Pancreas (tissue), 10 donors: ENCODE measurements at regions of chr6 and their contacts with region 1.

Region 1: GRCh38 chr6:85764844-85765243 is 122.2 kb upstream of the SYNCRIP start:
- DNase-seq: no peak
- ATAC-seq: no peak
- H3K4me3 ChIP-seq: no peak overlapping the region
- H3K27ac ChIP-seq: no peak overlapping the region
- H3K4me1 ChIP-seq: no peaks in the 10 kb centered on the region
- H3K27me3 ChIP-seq: no peaks in the 10 kb centered on the region
- CTCF ChIP-seq: no peak

Region 2: DNA sequence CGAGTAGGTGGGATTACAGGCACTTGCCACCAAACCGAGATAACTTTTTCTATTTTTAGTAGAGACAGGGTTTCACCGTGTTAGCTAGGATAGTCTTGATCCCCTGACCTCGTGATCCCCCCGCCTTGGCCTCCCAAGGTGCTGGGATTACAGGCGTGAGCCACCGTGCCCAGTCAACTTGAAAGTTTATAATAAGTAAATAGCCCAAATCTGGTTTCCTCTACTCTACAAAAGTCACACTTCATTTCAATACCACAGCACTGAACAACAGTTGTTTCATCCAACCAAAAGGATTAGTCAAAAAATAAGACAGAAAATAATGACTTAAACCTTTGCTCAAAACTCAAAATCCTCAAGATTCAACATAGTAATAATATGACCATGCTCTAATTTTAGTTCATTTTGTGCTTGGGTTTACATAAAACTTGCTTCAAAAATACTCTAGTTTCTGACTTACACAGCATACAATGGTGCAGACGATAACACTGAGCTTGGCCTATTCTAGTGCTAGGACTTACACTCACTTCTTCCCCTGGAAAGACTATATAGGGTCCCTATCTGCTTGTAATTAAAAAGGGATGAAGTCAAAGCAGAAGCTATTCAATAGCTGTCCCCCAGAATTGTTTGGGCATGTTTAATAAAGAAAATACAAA is 258.3 kb before region 1 on chr6:
- intact Hi-C with region 1: no loop called
- DNase-seq: no peak
- ATAC-seq: no peak
- H3K4me3 ChIP-seq: no peak overlapping the region
- H3K27ac ChIP-seq: no peak overlapping the region
- H3K4me1 ChIP-seq: no peaks in the 10 kb centered on the region
- H3K27me3 ChIP-seq: no peaks in the 10 kb centered on the region
- CTCF ChIP-seq: no peak

Region 3: GRCh38 chr6:85660181-85660611 is 104.6 kb before region 1 on chr6:
- intact Hi-C with region 1: no loop called
- DNase-seq: no peak
- ATAC-seq: no peak
- H3K4me3 ChIP-seq: no peak overlapping the region
- H3K27ac ChIP-seq: no peak overlapping the region
- H3K4me1 ChIP-seq: no peaks in the 10 kb centered on the region
- H3K27me3 ChIP-seq: no peaks in the 10 kb centered on the region
- CTCF ChIP-seq: no peak

Region 4: DNA sequence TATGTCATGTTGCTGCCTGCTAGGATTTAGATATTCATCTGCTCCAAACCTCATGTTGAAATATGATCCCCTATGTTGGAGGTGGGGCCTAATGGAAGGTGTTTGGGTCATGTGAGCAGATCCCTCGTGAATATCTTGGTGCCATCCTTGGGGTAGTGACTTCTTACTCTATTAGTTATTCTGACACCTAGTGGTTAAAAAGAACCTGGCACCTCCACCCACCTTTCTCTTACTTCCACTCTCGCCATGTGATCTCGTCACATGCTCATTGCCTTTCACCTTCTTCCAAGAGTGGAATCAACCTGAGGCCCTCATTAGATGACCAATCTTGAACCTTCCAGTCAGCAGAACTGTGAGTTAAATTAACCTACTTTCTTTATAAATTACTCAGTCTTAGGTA is 427.3 kb after region 1 on chr6:
- intact Hi-C with region 1: loop called in 1 of 3 experiments (anchors 10 kb)
- DNase-seq: peak in 3 of 6 donors; percentile 14 to 28 (median 21)
- ATAC-seq: peak; percentile 71 to 90 (median 88)
- H3K4me3 ChIP-seq: no peak overlapping the region
- H3K27ac ChIP-seq: no peak overlapping the region
- H3K4me1 ChIP-seq: no peaks in the 10 kb centered on the region
- H3K27me3 ChIP-seq: no peaks in the 10 kb centered on the region
- CTCF ChIP-seq: peak; percentile 27 to 39 (median 33)